ENCODE measurements at regions of chr1 and their contacts with region 1.

Region 1: DNA sequence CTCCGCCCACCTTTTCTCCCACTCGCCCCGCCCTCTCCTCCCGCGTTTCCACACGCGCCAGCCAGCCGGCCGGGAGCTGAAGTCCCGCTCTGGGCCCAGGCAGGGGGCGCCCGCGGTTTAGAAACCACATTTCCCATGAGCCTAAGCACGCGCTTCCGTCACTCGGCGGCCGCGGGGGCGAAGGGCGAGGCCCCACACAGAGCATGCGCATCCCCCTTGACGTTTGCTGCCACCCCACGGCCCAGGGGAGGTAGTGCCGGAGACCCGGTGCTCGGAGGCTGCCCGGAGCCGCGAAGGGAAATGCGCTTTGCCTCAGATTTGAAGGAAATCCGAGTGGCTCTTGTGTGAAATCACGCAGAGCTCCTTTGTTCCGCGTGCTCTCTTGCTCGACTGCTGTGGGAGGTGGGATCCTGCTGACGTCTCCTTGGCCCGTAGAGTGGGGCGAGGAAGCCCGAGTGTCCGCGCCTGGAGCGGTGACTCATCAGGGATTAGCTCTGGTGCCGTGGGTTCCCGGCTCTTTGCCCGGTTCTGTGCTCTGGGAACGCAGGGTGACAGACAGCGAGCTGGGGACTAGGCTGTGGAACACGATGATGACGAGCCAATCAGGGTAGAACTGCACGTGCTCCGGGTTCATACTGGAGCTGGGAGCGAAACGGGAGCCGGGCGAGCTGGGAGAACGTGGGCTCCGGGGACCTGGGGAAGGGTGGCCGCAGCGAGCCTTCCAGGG is 407 bp upstream of the B3GALNT2 start:
- DNase-seq: peak; percentile 95 to 99 (median 98)
- ATAC-seq: peak; percentile 93
- H3K4me3 ChIP-seq: peak overlapping the region; percentile 93
- H3K4me3 Mint-ChIP-seq: peak overlapping the region; percentile 83 to 98 (median 96)
- H3K27ac ChIP-seq: peak overlapping the region; percentile 90
- H3K27ac Mint-ChIP-seq: peak overlapping the region; percentile 94 to 98 (median 97)
- H3K4me1 ChIP-seq: peaks cover 0 to 9% of the 10 kb centered on the region in 2 donors
- H3K4me1 Mint-ChIP-seq: peaks cover 4 to 28% (median 20%) of the 10 kb centered on the region in 7 donors
- H3K27me3 ChIP-seq: no peaks in the 10 kb centered on the region
- H3K27me3 Mint-ChIP-seq: peaks cover 0 to 9% (median 0%) of the 10 kb centered on the region in 5 donors

Region 2: DNA sequence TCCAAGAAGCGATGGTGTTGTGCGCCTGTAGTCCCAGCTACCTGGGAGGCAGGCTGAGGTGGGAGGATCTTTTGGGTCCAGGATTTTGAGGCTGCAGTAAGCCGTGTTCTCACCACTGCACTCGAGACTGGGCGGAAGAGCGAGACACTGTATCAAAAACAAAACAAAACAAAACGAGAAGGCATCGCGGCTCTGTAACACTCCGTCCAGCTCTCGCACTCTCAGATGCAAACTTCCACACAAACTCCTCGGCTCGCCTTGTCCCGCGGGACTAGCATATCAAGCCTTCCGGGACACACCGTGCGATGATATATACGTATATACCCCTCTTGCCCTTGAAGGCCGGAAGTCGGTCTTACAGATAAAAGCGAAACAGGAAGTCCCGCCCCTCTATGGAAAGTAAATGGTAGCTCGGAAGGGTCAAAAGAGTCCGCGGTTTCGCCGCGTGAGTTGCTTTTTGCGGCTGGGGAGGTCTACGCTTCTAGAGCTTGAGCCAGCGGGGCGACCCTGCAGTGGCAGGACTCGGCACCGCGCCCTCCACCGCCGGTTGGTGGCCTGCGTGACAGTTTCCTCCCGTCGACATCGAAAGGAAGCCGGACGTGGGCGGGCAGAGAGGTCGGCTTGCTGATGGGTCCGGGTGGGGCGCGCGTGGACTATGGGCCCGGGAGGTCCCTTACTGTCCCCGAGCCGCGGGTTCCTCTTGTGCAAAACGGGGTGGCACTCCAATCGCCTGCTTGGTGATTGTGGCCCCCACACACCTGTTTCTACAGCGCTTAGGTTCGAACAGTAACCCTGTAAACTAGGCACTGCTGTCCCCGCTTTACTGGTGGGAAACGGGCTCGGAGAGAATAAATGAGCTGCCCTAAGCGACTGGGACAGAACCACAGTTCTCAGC is 1131.3 kb before region 1 on chr1 and contains the start of gene COA6:
- CTCF ChIA-PET with region 1: no interaction called
- POLR2A ChIA-PET with region 1: interaction called, 6 read pairs
- intact Hi-C with region 1: loop called (anchors 1 kb)
- DNase-seq: peak; percentile 76 to 92 (median 90)
- ATAC-seq: peak; percentile 91
- H3K4me3 ChIP-seq: peak within 1 kb of the TSS; percentile 73
- H3K4me3 Mint-ChIP-seq: peak within 1 kb of the TSS; percentile 93 to 100 (median 97)
- H3K27ac ChIP-seq: peak within 1 kb of the TSS; percentile 95
- H3K27ac Mint-ChIP-seq: peak within 1 kb of the TSS; percentile 97 to 100 (median 99)
- H3K4me1 ChIP-seq: peaks cover 12 to 16% of the 10 kb centered on the region in 2 donors
- H3K4me1 Mint-ChIP-seq: peaks cover 30 to 66% (median 63%) of the 10 kb centered on the region in 7 donors
- H3K27me3 ChIP-seq: no peaks in the 10 kb centered on the region
- H3K27me3 Mint-ChIP-seq: no peaks in the 10 kb centered on the region
- total RNA-seq, gene COA6: 9.5 to 47.3 (median 18.5) TPM

Region 3: GRCh38 chr1:234842726-234843641 is 661.7 kb before region 1 on chr1:
- CTCF ChIA-PET with region 1: no interaction called
- POLR2A ChIA-PET with region 1: no interaction called
- intact Hi-C with region 1: loop called in 1 of 2 experiments (anchors 10 kb)
- DNase-seq: peak in 8 of 9 donors; percentile 7 to 81 (median 30)
- ATAC-seq: peak; percentile 26
- H3K4me3 ChIP-seq: peak overlapping the region; percentile 5
- H3K4me3 Mint-ChIP-seq: peak overlapping the region; percentile 30 to 77 (median 62)
- H3K27ac ChIP-seq: peak overlapping the region; percentile 15
- H3K27ac Mint-ChIP-seq: peak overlapping the region; percentile 30 to 90 (median 77)
- H3K4me1 ChIP-seq: peaks cover 36 to 57% of the 10 kb centered on the region in 2 donors
- H3K4me1 Mint-ChIP-seq: peaks cover 44 to 89% (median 74%) of the 10 kb centered on the region in 7 donors
- H3K27me3 ChIP-seq: no peaks in the 10 kb centered on the region
- H3K27me3 Mint-ChIP-seq: no peaks in the 10 kb centered on the region

Region 4: DNA sequence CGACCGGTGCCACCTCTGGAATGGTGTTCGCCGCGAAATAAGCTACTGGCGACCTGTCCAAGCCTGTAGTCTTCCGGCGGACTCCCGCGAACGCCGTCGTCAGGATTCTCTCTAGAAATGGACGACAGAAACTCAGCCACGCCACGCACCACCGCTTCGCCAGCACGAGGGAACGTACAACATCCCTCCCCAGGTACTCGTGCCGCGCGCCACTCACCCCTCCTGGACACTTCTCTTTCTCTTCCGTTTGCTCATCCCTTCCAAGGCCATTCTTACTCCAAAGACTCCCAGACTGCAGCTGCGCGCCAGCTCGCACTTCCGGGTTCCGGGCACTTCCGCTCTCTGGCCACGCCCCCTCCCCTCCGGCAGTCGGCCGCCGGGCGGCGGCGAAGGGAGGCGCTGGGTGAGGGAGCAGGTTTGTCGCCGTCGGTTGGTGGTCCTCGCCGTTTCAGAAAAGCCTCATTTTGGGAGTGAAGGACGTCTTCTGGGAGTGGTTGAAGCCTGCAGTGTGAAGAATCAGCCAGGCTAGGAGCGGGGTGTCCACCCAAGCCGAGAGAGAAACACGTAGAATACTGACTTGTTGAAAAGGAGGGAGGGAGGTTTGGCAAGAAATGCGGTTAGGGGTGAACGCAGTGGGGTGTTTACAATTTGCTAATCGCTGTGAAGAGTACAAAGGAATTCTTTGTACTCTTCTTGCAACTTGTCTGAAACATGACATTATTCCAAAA is 343.5 kb before region 1 on chr1 and contains the start of gene RBM34:
- CTCF ChIA-PET with region 1: no interaction called
- POLR2A ChIA-PET with region 1: no interaction called
- intact Hi-C with region 1: loop called (anchors 1 to 2 kb)
- DNase-seq: peak; percentile 87 to 95 (median 91)
- ATAC-seq: peak; percentile 96
- H3K4me3 ChIP-seq: peak within 1 kb of the TSS; percentile 92
- H3K4me3 Mint-ChIP-seq: peak within 1 kb of the TSS in 8 of 10 donors; percentile 96 to 100 (median 98)
- H3K27ac ChIP-seq: peak within 1 kb of the TSS; percentile 86
- H3K27ac Mint-ChIP-seq: peak within 1 kb of the TSS; percentile 97 to 100 (median 99)
- H3K4me1 ChIP-seq: peaks cover 30 to 33% of the 10 kb centered on the region in 2 donors
- H3K4me1 Mint-ChIP-seq: peaks cover 8 to 30% (median 17%) of the 10 kb centered on the region in 7 donors
- H3K27me3 ChIP-seq: no peaks in the 10 kb centered on the region
- H3K27me3 Mint-ChIP-seq: no peaks in the 10 kb centered on the region
- total RNA-seq, gene RBM34: 105 to 171 (median 137) TPM

Region 5: DNA sequence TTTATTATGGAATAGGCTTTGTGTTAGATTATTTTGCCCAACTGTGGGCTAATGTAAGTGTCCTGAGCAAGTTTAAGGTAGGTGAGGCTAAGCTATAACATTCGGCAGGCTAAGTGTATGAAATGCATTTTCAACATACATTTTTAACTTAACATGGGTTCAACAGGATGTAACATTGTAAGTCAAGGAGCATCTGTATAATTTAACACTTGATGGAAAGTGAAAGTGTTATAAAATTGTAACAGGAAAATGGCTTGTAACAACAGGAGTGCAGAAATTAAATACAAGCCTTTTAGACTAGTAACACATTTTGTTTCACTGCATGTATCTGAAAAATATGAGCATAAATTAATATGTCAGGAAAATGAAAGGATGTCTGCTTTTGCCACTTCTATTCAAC is 42.7 kb before region 1 on chr1:
- CTCF ChIA-PET with region 1: no interaction called
- POLR2A ChIA-PET with region 1: interaction called, 5 read pairs
- intact Hi-C with region 1: loop called in 1 of 2 experiments (anchors 1 kb)
- DNase-seq: no peak
- ATAC-seq: no peak
- H3K4me3 ChIP-seq: no peak overlapping the region
- H3K4me3 Mint-ChIP-seq: peak overlapping the region in 4 of 10 donors; percentile 10 to 28 (median 13)
- H3K27ac ChIP-seq: no peak overlapping the region
- H3K27ac Mint-ChIP-seq: peak overlapping the region in 5 of 9 donors; percentile 2 to 63 (median 29)
- H3K4me1 ChIP-seq: peaks cover 0 to 4% of the 10 kb centered on the region in 2 donors
- H3K4me1 Mint-ChIP-seq: peaks cover 7 to 24% (median 18%) of the 10 kb centered on the region in 7 donors
- H3K27me3 ChIP-seq: no peaks in the 10 kb centered on the region
- H3K27me3 Mint-ChIP-seq: no peaks in the 10 kb centered on the region

Region 6: DNA sequence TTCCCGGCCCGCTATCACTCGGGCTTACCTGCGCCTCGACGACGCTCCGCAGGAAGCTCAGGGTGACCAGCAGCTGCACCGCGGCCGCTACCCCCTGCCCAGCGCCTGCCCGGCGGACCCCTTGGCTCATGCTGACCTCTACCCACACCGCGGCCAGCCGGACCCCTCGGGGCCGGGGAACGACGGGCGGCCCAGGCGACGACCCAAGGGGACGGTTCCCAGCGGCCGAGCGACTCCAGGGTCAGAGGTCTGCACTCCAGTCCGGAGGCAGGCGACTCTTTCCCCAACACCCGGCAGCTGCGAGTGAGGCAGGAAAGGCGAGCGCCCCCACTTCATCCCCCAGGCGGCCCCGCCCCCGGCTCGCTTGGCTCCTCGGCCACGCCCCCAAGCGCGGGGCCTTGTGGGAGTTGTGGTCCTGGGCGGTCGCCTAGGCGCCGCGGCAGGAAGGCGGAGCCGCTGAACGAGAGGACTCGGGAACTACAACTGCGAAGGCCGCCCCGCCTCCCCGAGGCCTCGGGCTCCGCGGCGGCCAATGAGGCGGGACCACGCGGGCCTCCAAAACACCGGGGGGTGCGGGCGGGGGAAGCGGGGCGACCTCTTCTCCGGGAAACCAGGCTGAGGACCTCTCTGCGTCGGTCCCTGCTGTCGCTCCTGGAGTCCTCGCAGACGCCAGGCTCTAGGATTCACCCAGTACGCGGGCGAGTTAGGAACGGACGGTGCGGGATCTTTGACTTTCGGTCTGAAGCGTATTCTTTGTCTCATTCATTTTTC is 777.2 kb after region 1 on chr1 and contains the start of gene ERO1B:
- CTCF ChIA-PET with region 1: no interaction called
- POLR2A ChIA-PET with region 1: no interaction called
- intact Hi-C with region 1: loop called (anchors 2 kb)
- DNase-seq: peak; percentile 95 to 99 (median 97)
- ATAC-seq: peak; percentile 98
- H3K4me3 ChIP-seq: peak within 1 kb of the TSS; percentile 83
- H3K4me3 Mint-ChIP-seq: peak within 1 kb of the TSS; percentile 80 to 97 (median 94)
- H3K27ac ChIP-seq: peak within 1 kb of the TSS; percentile 82
- H3K27ac Mint-ChIP-seq: peak within 1 kb of the TSS; percentile 80 to 96 (median 95)
- H3K4me1 ChIP-seq: peaks cover 7 to 34% of the 10 kb centered on the region in 2 donors
- H3K4me1 Mint-ChIP-seq: peaks cover 29 to 82% (median 57%) of the 10 kb centered on the region in 7 donors
- H3K27me3 ChIP-seq: no peaks in the 10 kb centered on the region
- H3K27me3 Mint-ChIP-seq: peaks cover 0 to 10% (median 0%) of the 10 kb centered on the region in 5 donors
- total RNA-seq, gene ERO1B: 5.0 to 26.8 (median 16.0) TPM

Region 7: GRCh38 chr1:236795035-236795756 is 1290.5 kb after region 1 on chr1 and contains the start of gene MTR:
- CTCF ChIA-PET with region 1: no interaction called
- POLR2A ChIA-PET with region 1: no interaction called
- intact Hi-C with region 1: loop called in 1 of 2 experiments (anchors 1 kb)
- DNase-seq: peak; percentile 84 to 97 (median 96)
- ATAC-seq: peak; percentile 95
- H3K4me3 ChIP-seq: peak within 1 kb of the TSS; percentile 61
- H3K4me3 Mint-ChIP-seq: peak within 1 kb of the TSS; percentile 87 to 99 (median 95)
- H3K27ac ChIP-seq: peak within 1 kb of the TSS; percentile 98
- H3K27ac Mint-ChIP-seq: peak within 1 kb of the TSS; percentile 93 to 100 (median 97)
- H3K4me1 ChIP-seq: peaks cover 13 to 14% of the 10 kb centered on the region in 2 donors
- H3K4me1 Mint-ChIP-seq: peaks cover 14 to 49% (median 41%) of the 10 kb centered on the region in 7 donors
- H3K27me3 ChIP-seq: no peaks in the 10 kb centered on the region
- H3K27me3 Mint-ChIP-seq: peaks cover 0 to 13% (median 0%) of the 10 kb centered on the region in 5 donors
- total RNA-seq, gene MTR: 42.9 to 78.8 (median 49.4) TPM